Activated CD4-positive, alpha-beta T cell treated with anti-CD3 and anti-CD28 coated beads for 36 hours (primary cell): ENCODE measurements at regions of chr12 and their contacts with region 1.

Region 1: DNA sequence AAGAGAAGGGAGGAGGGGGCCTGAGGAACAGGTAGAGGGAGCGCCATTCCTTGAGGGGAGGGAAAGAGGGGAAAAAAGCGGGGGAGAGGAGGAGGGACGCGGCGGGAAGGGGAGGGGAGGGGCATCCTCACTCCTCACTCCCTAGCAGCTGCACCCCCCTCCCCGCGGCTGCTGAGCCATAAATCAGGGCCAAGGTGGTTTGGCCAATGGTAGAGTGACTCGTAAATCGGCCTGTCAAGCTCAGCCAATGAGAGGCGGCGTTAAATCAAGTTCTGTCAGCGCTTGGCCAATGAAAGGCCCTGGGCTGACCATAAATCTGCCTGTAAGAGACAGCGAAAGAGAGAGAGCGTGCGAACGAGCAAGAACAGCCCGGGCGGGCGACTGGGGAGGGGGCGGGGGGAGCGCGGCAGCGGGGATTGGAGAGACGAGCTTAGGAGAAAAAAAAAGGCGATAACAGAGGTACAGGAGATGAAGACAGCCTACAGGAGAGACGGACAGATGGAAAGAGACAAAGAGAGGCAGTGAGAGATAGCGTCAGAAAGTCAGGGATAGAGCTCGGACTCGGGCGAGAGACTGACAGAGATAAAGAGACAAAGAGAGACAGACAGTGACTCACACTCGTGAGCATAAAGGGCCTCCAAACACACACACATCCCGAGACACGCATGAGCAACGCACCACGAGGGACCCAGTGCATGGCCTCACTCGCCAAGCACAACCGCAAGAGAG is 5.1 kb downstream of the GPR84 start:
- DNase-seq: peak; percentile 96
- ATAC-seq: peak; percentile 93
- H3K4me3 Mint-ChIP-seq: no peak overlapping the region
- H3K27ac Mint-ChIP-seq: no peak overlapping the region
- H3K4me1 Mint-ChIP-seq: peaks cover 18% of the 10 kb centered on the region
- H3K27me3 Mint-ChIP-seq: no peaks in the 10 kb centered on the region

Region 2: GRCh38 chr12:54204316-54204715 is 154.9 kb before region 1 on chr12:
- CTCF ChIA-PET with region 1: no interaction called
- POLR2A ChIA-PET with region 1: no interaction called
- intact Hi-C with region 1: no loop called
- DNase-seq: no peak
- ATAC-seq: no peak
- H3K4me3 Mint-ChIP-seq: no peak overlapping the region
- H3K27ac Mint-ChIP-seq: no peak overlapping the region
- H3K4me1 Mint-ChIP-seq: no peaks in the 10 kb centered on the region
- H3K27me3 Mint-ChIP-seq: peaks cover 38% of the 10 kb centered on the region

Region 3: GRCh38 chr12:54214553-54215406 is 144.4 kb before region 1 on chr12:
- CTCF ChIA-PET with region 1: interaction called, 35 read pairs
- POLR2A ChIA-PET with region 1: no interaction called
- intact Hi-C with region 1: loop called (anchors 1 to 2 kb)
- DNase-seq: peak; percentile 97
- ATAC-seq: peak; percentile 92
- H3K4me3 Mint-ChIP-seq: peak overlapping the region; percentile 63
- H3K27ac Mint-ChIP-seq: no peak overlapping the region
- H3K4me1 Mint-ChIP-seq: peaks cover 26% of the 10 kb centered on the region
- H3K27me3 Mint-ChIP-seq: peaks cover 15% of the 10 kb centered on the region

Region 4: DNA sequence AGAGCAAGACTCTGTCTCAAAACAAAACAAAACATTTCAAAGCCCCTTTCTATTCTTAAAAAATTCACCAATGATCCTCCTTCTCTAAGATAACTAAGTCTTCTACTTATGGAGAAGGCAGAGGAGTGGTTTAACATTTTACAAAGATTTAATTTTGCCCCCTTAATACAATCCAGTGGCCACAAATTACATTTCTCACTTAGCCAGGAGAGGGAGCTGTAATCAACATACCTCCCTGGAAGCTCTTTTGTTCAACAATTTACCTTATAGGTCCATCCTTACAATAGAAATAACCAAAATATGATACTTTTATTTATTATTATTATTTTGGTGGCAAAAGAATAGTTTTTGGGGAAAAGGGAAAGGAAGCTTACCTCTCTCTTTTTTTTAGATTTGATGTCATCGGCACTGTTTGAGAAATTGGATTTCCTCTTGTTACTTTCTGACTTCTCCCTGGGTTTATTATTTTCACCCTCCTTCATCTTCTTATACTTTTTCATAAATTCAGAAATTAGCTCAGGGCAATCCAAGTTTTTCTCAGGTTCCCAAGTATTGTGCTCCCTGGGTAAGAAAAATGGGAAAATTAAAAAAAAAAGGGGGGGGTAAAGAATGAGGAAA is 107.4 kb before region 1 on chr12:
- CTCF ChIA-PET with region 1: interaction called, 13 read pairs
- POLR2A ChIA-PET with region 1: no interaction called
- intact Hi-C with region 1: no loop called
- DNase-seq: no peak
- ATAC-seq: peak; percentile 75
- H3K4me3 Mint-ChIP-seq: no peak overlapping the region
- H3K27ac Mint-ChIP-seq: no peak overlapping the region
- H3K4me1 Mint-ChIP-seq: peaks cover 10% of the 10 kb centered on the region
- H3K27me3 Mint-ChIP-seq: no peaks in the 10 kb centered on the region

Region 5: GRCh38 chr12:54285150-54286041 is 73.8 kb before region 1 on chr12:
- CTCF ChIA-PET with region 1: interaction called, 12 read pairs
- POLR2A ChIA-PET with region 1: interaction called, 44 read pairs
- intact Hi-C with region 1: loop called (anchors 1 kb)
- DNase-seq: no peak
- ATAC-seq: no peak
- H3K4me3 Mint-ChIP-seq: no peak overlapping the region
- H3K27ac Mint-ChIP-seq: peak overlapping the region; percentile 63
- H3K4me1 Mint-ChIP-seq: peaks cover 33% of the 10 kb centered on the region
- H3K27me3 Mint-ChIP-seq: no peaks in the 10 kb centered on the region

Region 6: GRCh38 chr12:54294152-54294952 is 64.8 kb before region 1 on chr12:
- CTCF ChIA-PET with region 1: interaction called, 25 read pairs
- POLR2A ChIA-PET with region 1: interaction called, 7 read pairs
- intact Hi-C with region 1: loop called (anchors 1 to 2 kb)
- DNase-seq: peak; percentile 83
- ATAC-seq: peak; percentile 82
- H3K4me3 Mint-ChIP-seq: no peak overlapping the region
- H3K27ac Mint-ChIP-seq: no peak overlapping the region
- H3K4me1 Mint-ChIP-seq: peaks cover 5% of the 10 kb centered on the region
- H3K27me3 Mint-ChIP-seq: peaks cover 10% of the 10 kb centered on the region

Region 7: GRCh38 chr12:54337280-54337842 is 21.8 kb before region 1 on chr12:
- CTCF ChIA-PET with region 1: interaction called, 85 read pairs
- POLR2A ChIA-PET with region 1: interaction called, 3 read pairs
- intact Hi-C with region 1: loop called (anchors 1 to 2 kb)
- DNase-seq: no peak
- ATAC-seq: no peak
- H3K4me3 Mint-ChIP-seq: no peak overlapping the region
- H3K27ac Mint-ChIP-seq: no peak overlapping the region
- H3K4me1 Mint-ChIP-seq: peaks cover 13% of the 10 kb centered on the region
- H3K27me3 Mint-ChIP-seq: no peaks in the 10 kb centered on the region

Region 8: GRCh38 chr12:54497883-54498282 is 138.7 kb after region 1 on chr12:
- CTCF ChIA-PET with region 1: no interaction called
- POLR2A ChIA-PET with region 1: no interaction called
- intact Hi-C with region 1: loop called in 1 of 2 experiments (anchors 1 kb)
- DNase-seq: no peak
- ATAC-seq: peak; percentile 4
- H3K4me3 Mint-ChIP-seq: peak overlapping the region; percentile 99
- H3K27ac Mint-ChIP-seq: peak overlapping the region; percentile 98
- H3K4me1 Mint-ChIP-seq: peaks cover 39% of the 10 kb centered on the region
- H3K27me3 Mint-ChIP-seq: no peaks in the 10 kb centered on the region

Region 9: GRCh38 chr12:55624056-55624455 is 1264.9 kb after region 1 on chr12:
- CTCF ChIA-PET with region 1: no interaction called
- POLR2A ChIA-PET with region 1: no interaction called
- intact Hi-C with region 1: no loop called
- DNase-seq: no peak
- ATAC-seq: peak; percentile 84
- H3K4me3 Mint-ChIP-seq: no peak overlapping the region
- H3K27ac Mint-ChIP-seq: no peak overlapping the region
- H3K4me1 Mint-ChIP-seq: peaks cover 17% of the 10 kb centered on the region
- H3K27me3 Mint-ChIP-seq: peaks cover 31% of the 10 kb centered on the region